PC-9 (cell line): ENCODE measurements at regions of chr5 and their contacts with region 1.

Region 1: GRCh38 chr5:145554399-145554798 is 280.7 kb downstream of the PRELID2 start:
- DNase-seq: peak in 1 of 2 experiments; percentile 23
- H3K4me3 ChIP-seq: no peak overlapping the region
- H3K27ac ChIP-seq: no peak overlapping the region
- H3K4me1 ChIP-seq: no peaks in the 10 kb centered on the region
- H3K27me3 ChIP-seq: no peaks in the 10 kb centered on the region
- CTCF ChIP-seq: no peak

Region 2: GRCh38 chr5:145429170-145429569 is 125.2 kb before region 1 on chr5:
- CTCF ChIA-PET with region 1: no interaction called
- POLR2A ChIA-PET with region 1: no interaction called
- intact Hi-C with region 1: no loop called
- DNase-seq: no peak
- H3K4me3 ChIP-seq: no peak overlapping the region
- H3K27ac ChIP-seq: no peak overlapping the region
- H3K4me1 ChIP-seq: no peaks in the 10 kb centered on the region
- H3K27me3 ChIP-seq: no peaks in the 10 kb centered on the region
- CTCF ChIP-seq: no peak

Region 3: GRCh38 chr5:145495741-145496140 is 58.7 kb before region 1 on chr5:
- CTCF ChIA-PET with region 1: no interaction called
- POLR2A ChIA-PET with region 1: no interaction called
- intact Hi-C with region 1: loop called (anchors 2 kb)
- DNase-seq: peak in 1 of 2 experiments; percentile 53
- H3K4me3 ChIP-seq: no peak overlapping the region
- H3K27ac ChIP-seq: 0 out of 2 replicates have a peak overlapping the region, but pooled peaks have one; percentile 24
- H3K4me1 ChIP-seq: peaks cover 22% of the 10 kb centered on the region
- H3K27me3 ChIP-seq: no peaks in the 10 kb centered on the region
- CTCF ChIP-seq: no peak